CD4-positive, alpha-beta T cell (primary cell): ENCODE measurements at regions of chr1 and their contacts with region 1.

Region 1: DNA sequence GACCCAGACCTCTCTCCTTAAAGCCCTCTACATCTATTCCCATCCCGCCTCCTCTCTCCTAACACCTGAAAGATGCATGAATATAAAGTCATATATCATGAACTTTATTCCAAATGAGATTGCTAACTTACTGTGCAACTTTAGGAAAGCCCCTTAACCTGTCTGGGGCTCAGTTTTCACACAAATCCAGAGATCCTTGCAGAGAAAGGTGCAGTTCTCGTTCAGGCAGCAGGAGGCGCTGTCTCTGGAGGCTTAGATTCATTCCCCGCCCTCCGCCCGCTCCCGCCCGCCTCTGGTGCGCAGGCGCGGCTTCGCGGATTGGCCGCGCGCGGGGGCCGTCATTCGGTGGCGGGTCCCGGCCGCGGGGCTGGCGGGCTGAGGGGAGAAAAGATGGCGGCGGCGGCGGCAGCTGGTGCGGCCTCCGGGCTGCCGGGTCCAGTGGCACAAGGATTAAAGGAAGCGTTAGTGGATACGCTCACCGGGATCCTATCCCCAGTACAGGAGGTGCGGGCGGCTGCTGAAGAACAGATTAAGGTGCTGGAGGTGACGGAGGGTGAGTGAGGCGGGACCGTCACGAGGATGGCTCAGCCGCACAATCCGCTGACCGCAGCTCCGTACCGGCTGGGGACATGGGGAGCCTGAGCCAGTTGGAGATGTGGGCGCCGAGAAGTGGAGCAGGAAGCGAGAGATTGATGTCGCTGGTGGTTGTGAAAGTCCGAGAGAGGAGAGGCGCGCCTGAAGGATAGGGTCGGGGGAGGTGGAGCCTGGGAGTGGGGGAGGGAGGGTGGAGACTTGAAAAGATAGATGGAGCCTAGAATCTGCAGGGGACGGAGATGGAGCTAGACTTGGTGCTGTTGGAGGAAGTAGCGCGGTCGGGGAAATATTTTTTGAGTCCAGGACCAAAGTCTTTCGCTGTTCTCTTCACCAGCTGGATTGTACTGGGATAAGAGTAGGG is at the start of gene IPO9:
- DNase-seq: peak; percentile 90 to 98 (median 94)
- ATAC-seq: peak; percentile 91
- H3K4me3 ChIP-seq: peak within 1 kb of the TSS; percentile 94
- H3K4me3 Mint-ChIP-seq: peak within 1 kb of the TSS; percentile 95
- H3K27ac ChIP-seq: peak within 1 kb of the TSS; percentile 84 to 90
- H3K27ac Mint-ChIP-seq: peak within 1 kb of the TSS; percentile 88
- H3K4me1 ChIP-seq: peaks cover 33% of the 10 kb centered on the region
- H3K4me1 Mint-ChIP-seq: peaks cover 44% of the 10 kb centered on the region
- H3K27me3 ChIP-seq: no peaks in the 10 kb centered on the region
- H3K27me3 Mint-ChIP-seq: no peaks in the 10 kb centered on the region
- CTCF ChIP-seq: peak; percentile 97
- total RNA-seq, gene IPO9: 17.1 to 20.1 TPM

Region 2: GRCh38 chr1:201842472-201843027 is 13.5 kb after region 1 on chr1:
- CTCF ChIA-PET with region 1: interaction called, 10 read pairs
- POLR2A ChIA-PET with region 1: interaction called, 3 read pairs
- intact Hi-C with region 1: no loop called
- DNase-seq: no peak
- ATAC-seq: no peak
- H3K4me3 ChIP-seq: no peak overlapping the region
- H3K4me3 Mint-ChIP-seq: no peak overlapping the region
- H3K27ac ChIP-seq: no peak overlapping the region
- H3K27ac Mint-ChIP-seq: peak overlapping the region; percentile 43
- H3K4me1 ChIP-seq: no peaks in the 10 kb centered on the region
- H3K4me1 Mint-ChIP-seq: peaks cover 49% of the 10 kb centered on the region
- H3K27me3 ChIP-seq: no peaks in the 10 kb centered on the region
- H3K27me3 Mint-ChIP-seq: no peaks in the 10 kb centered on the region
- CTCF ChIP-seq: no peak

Region 3: DNA sequence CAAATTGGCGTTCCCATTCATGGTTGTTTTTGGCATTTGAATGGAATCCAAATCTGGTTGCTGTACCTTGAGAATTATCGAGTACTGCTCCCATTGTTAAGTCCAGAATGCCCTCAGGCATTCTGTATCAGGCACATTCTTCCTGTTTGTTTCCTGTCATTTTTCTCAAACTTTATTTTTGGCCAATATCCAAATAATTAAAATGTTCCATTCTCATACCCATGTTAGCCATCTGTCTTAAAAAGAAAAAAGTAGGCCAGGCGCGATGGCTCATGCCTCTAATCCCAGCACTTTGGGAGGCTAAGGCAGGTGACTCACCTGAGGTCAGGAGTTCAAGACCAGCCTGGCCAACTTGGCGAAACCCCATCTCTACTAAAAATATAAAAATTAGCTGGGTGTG is 30.3 kb after region 1 on chr1:
- CTCF ChIA-PET with region 1: no interaction called
- POLR2A ChIA-PET with region 1: no interaction called
- intact Hi-C with region 1: no loop called
- DNase-seq: no peak
- ATAC-seq: no peak
- H3K4me3 ChIP-seq: no peak overlapping the region
- H3K4me3 Mint-ChIP-seq: no peak overlapping the region
- H3K27ac ChIP-seq: no peak overlapping the region
- H3K27ac Mint-ChIP-seq: no peak overlapping the region
- H3K4me1 ChIP-seq: no peaks in the 10 kb centered on the region
- H3K4me1 Mint-ChIP-seq: no peaks in the 10 kb centered on the region
- H3K27me3 ChIP-seq: no peaks in the 10 kb centered on the region
- H3K27me3 Mint-ChIP-seq: no peaks in the 10 kb centered on the region
- CTCF ChIP-seq: no peak

Region 4: DNA sequence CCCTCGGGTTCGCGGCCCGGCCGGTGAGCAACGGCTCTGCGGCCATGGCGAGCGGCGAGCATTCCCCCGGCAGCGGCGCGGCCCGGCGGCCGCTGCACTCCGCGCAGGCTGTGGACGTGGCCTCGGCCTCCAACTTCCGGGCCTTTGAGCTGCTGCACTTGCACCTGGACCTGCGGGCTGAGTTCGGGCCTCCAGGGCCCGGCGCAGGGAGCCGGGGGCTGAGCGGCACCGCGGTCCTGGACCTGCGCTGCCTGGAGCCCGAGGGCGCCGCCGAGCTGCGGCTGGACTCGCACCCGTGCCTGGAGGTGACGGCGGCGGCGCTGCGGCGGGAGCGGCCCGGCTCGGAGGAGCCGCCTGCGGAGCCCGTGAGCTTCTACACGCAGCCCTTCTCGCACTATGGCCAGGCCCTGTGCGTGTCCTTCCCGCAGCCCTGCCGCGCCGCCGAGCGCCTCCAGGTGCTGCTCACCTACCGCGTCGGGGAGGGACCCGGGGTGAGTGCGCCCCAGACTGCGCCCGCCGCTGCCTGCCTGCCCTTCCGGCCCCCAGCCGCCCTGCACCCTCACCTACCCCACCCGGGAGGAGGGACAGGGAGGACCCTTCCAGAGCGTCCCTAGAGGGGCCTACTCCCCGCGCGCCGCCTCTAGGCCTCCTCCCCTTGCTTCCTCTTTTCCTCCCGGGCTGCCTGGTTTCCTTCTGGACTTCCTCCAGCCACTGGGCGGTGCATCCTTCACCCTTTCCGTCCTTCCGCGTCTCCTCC is 153.7 kb after region 1 on chr1 and contains the start of gene RNPEP:
- CTCF ChIA-PET with region 1: no interaction called
- POLR2A ChIA-PET with region 1: interaction called, 8 read pairs
- intact Hi-C with region 1: loop called in 1 of 2 experiments (anchors 2 kb)
- DNase-seq: peak; percentile 21 to 78 (median 51)
- ATAC-seq: peak; percentile 86
- H3K4me3 ChIP-seq: peak within 1 kb of the TSS; percentile 57
- H3K4me3 Mint-ChIP-seq: peak within 1 kb of the TSS; percentile 97
- H3K27ac ChIP-seq: no peak within 1 kb of the TSS
- H3K27ac Mint-ChIP-seq: peak within 1 kb of the TSS; percentile 87
- H3K4me1 ChIP-seq: peaks cover 17% of the 10 kb centered on the region
- H3K4me1 Mint-ChIP-seq: peaks cover 26% of the 10 kb centered on the region
- H3K27me3 ChIP-seq: no peaks in the 10 kb centered on the region
- H3K27me3 Mint-ChIP-seq: no peaks in the 10 kb centered on the region
- CTCF ChIP-seq: no peak
- total RNA-seq, gene RNPEP: 19.9 to 20.8 TPM